ENCODE measurements at regions of chr6 and their contacts with region 1.

Region 1: GRCh38 chr6:133939778-133940667 is 13.0 kb upstream of the TBPL1 start:
- DNase-seq: no peak
- ATAC-seq: no peak
- H3K4me3 ChIP-seq: no peak overlapping the region
- H3K27ac ChIP-seq: no peak overlapping the region
- H3K4me1 ChIP-seq: no peaks in the 10 kb centered on the region
- H3K27me3 ChIP-seq: no peaks in the 10 kb centered on the region
- CTCF ChIP-seq: no peak
- POLR2A ChIP-seq: no peak

Region 2: DNA sequence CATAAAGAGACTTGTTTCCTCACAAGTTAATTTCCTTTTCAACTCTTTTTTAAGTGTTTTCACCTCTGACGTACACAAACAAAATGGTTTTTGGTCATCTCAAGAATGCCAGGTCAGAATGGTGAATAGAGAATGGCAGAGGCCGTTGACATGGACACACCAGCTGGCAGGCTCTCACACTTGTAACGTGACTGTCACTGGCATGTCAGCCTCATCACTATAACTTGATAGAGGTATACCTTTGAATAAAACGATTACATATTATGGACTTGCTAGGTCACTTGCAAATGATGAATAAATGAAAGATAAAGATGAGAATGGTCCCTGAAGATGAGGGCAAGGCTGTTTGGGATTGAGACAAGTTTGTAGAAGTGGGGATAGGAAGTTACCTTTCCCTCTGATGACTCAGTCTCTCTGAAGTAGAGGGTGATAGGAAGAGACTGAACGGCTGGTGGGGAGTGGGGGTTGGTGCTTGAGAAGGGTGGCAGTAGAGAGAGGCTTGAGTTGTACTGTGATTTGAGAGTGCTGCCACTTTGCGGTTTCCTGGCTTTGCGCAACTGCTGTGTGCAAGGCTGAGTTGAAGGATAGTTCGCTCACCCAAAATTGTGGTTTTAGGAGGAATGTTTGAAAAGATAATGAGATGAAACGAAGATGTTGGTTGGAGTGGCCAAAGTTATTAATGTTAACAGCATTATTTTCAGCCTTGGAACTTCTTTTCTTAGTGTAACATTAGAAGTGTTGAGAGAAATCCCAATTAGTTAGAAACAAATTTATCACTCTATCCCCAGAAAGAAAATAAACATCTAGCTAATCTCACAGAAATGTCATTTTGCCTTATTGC is 43.3 kb after region 1 on chr6:
- in situ Hi-C with region 1: no loop called
- intact Hi-C with region 1: loop called (anchors 1 kb)
- DNase-seq: no peak
- ATAC-seq: no peak
- H3K4me3 ChIP-seq: no peak overlapping the region
- H3K27ac ChIP-seq: no peak overlapping the region
- H3K4me1 ChIP-seq: peaks cover 3 to 11% of the 10 kb centered on the region in 2 donors
- H3K27me3 ChIP-seq: no peaks in the 10 kb centered on the region
- CTCF ChIP-seq: no peak
- POLR2A ChIP-seq: no peak

Region 3: GRCh38 chr6:134063966-134064445 is 124.0 kb after region 1 on chr6:
- in situ Hi-C with region 1: loop called in 1 of 4 experiments (anchors 10 kb)
- intact Hi-C with region 1: no loop called
- DNase-seq: peak; percentile 25 to 69
- ATAC-seq: peak; percentile 98
- H3K4me3 ChIP-seq: no peak overlapping the region
- H3K27ac ChIP-seq: peak overlapping the region in 3 of 4 donors; percentile 34 to 77 (median 50)
- H3K4me1 ChIP-seq: peaks cover 7 to 8% of the 10 kb centered on the region in 2 donors
- H3K27me3 ChIP-seq: no peaks in the 10 kb centered on the region
- CTCF ChIP-seq: peak; percentile 54 to 89 (median 75)
- POLR2A ChIP-seq: no peak

Region 4: DNA sequence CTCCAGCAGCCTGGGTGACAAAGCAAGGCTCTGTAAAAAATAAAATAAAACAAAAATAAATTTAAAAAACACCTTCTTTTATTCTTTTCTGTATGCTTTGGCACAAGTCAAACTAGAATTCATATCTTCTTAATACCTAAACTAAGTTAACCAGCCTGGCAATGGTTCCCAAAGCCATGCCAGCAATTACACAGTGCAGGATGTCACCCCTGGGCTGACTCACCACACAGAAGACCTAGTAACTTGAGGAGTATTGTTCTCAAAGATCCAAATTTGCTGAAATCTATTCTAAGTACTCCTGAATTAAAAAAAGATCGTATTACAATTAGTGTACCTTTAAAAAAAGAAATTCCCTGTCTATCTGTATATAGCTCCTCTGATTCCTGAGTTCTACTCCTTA is 540.6 kb after region 1 on chr6:
- in situ Hi-C with region 1: no loop called
- intact Hi-C with region 1: no loop called
- DNase-seq: peak; percentile 52 to 67
- ATAC-seq: peak; percentile 86 to 91
- H3K4me3 ChIP-seq: no peak overlapping the region
- H3K27ac ChIP-seq: peak overlapping the region in 3 of 4 donors; percentile 57 to 75 (median 65)
- H3K4me1 ChIP-seq: peaks cover 32 to 34% of the 10 kb centered on the region in 2 donors
- H3K27me3 ChIP-seq: no peaks in the 10 kb centered on the region
- CTCF ChIP-seq: no peak
- POLR2A ChIP-seq: no peak